Common myeloid progenitor, CD34-positive (primary cell): ENCODE measurements at regions of chr6 and their contacts with region 1.

Region 1: GRCh38 chr6:73520688-73521350 is at the start of gene EEF1A1:
- DNase-seq: peak; percentile 100
- H3K4me3 ChIP-seq: peak within 1 kb of the TSS; percentile 85 to 99 (median 96)
- H3K27ac ChIP-seq: peak within 1 kb of the TSS; percentile 98 to 99
- H3K4me1 ChIP-seq: peaks cover 26 to 54% (median 37%) of the 10 kb centered on the region in 4 experiments
- H3K27me3 ChIP-seq: no peaks in the 10 kb centered on the region

Region 2: DNA sequence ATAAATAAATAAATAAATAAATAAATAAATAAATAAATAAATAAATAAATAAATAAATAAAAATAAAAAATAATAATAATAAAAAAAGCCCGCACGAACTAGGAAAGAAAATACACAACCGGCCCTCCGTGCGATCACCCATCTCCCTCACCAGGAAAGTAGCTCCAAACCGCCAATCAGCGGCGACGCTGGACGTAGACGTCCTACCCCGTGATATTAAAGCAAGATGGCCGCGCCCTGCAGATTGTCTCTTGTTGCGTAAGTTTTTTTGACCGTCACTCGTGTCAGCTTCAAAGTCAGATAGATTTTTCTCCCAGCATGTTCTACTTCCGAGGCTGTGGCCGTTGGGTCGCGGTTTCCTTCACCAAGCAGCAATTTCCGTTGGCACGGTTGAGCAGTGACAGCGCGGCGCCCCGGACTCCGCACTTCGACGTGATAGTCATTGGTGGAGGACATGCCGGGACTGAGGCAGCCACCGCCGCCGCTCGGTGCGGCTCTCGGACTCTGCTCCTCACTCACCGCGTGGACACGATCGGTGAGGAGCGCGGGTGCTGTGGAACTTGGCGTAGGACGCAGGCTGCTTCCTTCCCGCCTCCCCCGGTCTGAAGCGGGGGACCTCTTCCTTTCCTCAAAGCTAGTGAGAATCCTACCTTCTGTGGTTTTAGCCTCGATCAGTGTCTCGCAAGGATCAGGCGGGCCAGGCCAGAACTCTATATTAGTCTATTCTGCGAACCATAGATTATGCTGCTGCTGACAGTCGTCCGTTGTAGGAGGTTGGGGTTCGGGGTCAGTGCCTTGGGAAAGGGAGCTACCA is 59.1 kb before region 1 on chr6 and contains the start of gene MTO1:
- CTCF ChIA-PET with region 1: interaction called, 3 read pairs
- POLR2A ChIA-PET with region 1: interaction called, 11 read pairs
- DNase-seq: peak; percentile 89 to 96 (median 95)
- H3K4me3 ChIP-seq: peak within 1 kb of the TSS; percentile 88 to 98 (median 95)
- H3K27ac ChIP-seq: peak within 1 kb of the TSS; percentile 90 to 98
- H3K4me1 ChIP-seq: peaks cover 2 to 32% (median 13%) of the 10 kb centered on the region in 4 experiments
- H3K27me3 ChIP-seq: no peaks in the 10 kb centered on the region

Region 3: DNA sequence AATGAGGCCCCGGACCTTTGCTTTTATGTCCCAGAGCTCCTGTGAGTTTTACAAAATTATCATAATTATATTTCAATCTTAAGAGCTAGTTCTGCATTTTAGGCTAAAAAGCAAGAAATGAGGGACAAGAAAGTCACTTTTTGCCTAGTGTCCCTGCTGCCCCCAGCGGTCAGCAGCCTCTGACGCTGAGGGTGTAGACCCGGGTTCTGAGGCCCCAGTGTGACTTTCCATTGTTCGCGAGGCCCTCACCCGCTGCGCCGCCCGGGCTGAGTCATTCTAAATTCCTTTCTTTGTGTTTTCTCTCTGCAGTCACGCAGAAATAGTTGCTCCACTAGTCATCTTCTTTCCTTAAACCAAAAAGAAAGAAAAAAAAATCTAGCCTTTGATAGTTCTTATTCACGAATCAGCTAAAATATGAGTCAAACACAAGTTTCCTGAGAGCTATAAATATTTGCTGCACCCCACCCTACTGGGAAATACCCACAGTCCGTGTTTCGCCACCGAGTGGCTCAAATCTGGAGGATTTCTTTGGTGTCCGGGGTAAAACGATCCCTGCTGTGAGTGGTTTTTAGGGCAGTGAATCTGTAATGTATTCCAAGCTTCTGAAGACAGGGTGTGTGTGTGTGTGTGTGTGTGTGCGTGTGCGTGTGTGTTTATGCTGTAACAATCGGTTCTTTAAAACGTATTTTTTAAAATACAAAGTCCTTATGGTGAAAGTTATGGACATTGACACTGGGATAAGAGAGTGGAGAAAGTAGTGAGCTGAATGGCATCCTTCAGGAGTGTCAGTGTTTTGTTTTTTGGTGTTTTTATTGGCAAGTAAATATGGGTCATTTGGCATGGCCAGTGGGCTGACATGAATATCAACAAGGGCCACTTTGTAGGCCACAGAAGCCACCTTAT is 59.7 kb after region 1 on chr6:
- CTCF ChIA-PET with region 1: interaction called, 4 read pairs
- POLR2A ChIA-PET with region 1: interaction called, 16 read pairs
- DNase-seq: peak; percentile 70 to 86 (median 76)
- H3K4me3 ChIP-seq: peak overlapping the region in 5 of 7 experiments; percentile 17 to 59 (median 54)
- H3K27ac ChIP-seq: peak overlapping the region; percentile 64 to 84
- H3K4me1 ChIP-seq: peaks cover 11 to 27% (median 24%) of the 10 kb centered on the region in 4 experiments
- H3K27me3 ChIP-seq: no peaks in the 10 kb centered on the region

Region 4: DNA sequence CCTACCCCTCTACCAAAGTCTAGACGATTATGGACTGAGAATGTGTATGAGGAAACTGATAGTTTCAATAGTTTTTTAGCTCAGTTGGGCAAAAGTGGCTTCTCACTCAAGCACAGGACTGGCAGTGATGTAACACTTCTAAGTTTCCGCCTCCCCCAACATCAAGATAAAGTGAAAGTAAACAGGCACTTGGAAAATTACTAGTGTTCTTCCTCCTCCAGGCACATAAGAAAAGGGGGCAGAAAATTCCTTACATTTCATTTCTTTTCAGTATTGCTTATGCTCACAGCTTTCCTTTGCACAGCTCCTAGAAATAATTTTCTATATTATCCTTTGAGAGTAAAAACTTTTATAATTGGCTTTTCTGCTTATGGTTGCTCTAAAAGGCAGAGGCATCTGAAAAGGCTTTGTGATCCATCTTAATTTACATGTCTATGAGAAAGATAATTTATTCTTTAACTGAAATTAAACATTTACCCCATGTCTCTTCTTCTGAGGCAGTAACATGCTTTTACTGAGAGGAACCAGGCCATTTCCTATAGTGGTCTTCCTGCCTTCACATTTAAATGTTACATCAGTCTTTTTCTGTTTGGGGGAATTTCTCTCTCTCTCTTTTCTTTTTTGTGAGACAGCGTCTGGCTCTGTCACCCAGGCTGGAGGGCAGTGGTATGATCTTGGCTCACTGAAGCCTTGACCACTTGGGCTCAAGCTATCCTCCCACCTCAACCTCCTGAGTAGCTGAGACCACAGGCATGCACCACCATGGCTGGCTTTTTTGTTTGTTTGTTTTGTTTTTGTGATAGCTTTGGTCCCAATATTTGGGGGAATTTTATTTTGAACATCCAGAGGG is 65.0 kb after region 1 on chr6:
- CTCF ChIA-PET with region 1: interaction called, 4 read pairs
- POLR2A ChIA-PET with region 1: interaction called, 16 read pairs
- DNase-seq: peak; percentile 74 to 88 (median 82)
- H3K4me3 ChIP-seq: peak overlapping the region in 6 of 7 experiments; percentile 44 to 70 (median 56)
- H3K27ac ChIP-seq: peak overlapping the region; percentile 87 to 95
- H3K4me1 ChIP-seq: peaks cover 13 to 25% (median 19%) of the 10 kb centered on the region in 4 experiments
- H3K27me3 ChIP-seq: no peaks in the 10 kb centered on the region

Region 5: DNA sequence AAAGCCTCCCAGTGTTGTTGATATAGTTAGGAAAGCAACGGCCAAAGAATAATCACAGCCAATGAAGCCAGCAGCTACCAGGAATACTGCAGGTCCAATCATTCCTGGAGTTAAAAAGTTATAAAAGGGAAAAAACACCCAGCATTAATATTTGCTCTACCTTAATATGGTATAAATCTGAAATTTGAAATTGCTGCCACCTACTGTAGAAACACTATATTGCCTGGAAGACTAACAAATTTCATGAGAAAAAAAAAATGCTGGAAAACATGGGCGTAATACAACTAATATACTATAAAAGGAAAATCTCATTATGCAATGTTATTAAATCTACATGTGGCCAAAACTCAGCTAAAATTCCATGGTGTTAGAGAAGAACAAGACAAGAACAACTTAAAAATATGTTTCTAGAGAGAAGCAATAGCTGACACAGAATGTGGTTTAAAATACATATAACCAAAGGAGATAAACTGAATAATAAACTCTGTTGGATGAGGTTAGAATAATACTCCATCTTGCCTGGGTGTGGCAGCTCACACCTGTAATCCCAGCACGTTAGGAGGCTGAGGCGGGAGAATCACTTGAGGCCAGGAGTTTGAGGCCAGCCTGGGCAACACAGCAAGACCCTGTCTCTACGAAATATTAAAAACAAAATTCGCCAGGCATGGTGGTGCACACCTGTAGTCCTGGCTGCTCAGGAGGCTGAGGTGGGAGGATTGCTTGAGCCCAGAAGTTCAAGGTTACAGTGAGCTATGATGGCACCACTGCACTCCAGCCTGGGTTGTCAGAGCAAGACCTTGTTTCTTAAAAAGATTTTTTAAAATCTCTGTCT is 89.8 kb after region 1 on chr6:
- CTCF ChIA-PET with region 1: interaction called, 85 read pairs
- POLR2A ChIA-PET with region 1: interaction called, 12 read pairs
- DNase-seq: peak; percentile 54 to 75 (median 62)
- H3K4me3 ChIP-seq: no peak overlapping the region
- H3K27ac ChIP-seq: no peak overlapping the region
- H3K4me1 ChIP-seq: no peaks in the 10 kb centered on the region
- H3K27me3 ChIP-seq: no peaks in the 10 kb centered on the region